Natural killer cell (primary cell): ENCODE measurements at regions of chr3 and their contacts with region 1.

Region 1: DNA sequence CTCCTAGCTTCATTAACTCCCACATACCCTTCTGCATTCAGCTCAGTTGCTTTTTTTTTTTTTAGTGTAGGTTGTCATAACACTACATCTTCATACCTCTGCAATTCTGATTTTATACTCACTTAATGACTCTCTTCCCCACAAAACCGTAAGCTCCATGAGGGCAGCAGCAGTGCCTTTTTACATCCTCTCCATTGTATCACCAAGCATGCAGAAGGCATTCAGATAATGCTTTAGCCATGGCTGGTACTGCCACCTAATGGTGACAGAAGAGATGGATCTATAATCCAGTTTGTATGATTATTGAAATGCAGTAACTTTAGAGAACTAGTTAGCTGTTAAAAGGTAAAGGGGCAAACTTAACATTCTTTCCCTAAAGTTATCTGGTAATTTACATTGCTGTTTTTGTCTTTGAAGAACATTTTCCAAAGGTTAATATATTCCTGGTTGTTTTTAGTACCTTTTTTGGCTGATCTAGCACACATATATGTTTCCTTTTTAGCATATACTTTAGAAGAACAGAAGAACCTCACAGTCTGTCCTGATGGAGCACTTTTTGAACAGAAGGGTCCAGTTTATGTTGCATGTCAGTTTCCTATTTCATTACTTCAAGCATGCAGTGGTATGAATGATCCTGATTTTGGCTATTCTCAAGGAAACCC is 36.8 kb downstream of the ATP1B3 start:
- DNase-seq: peak in 1 of 2 donors; percentile 79
- ATAC-seq: peak; percentile 82 to 96 (median 91)
- H3K4me3 ChIP-seq: no peak overlapping the region
- H3K4me3 Mint-ChIP-seq: no peak overlapping the region
- H3K27ac ChIP-seq: no peak overlapping the region
- H3K27ac Mint-ChIP-seq: peak overlapping the region in 1 of 2 donors; percentile 25
- H3K4me1 ChIP-seq: no peaks in the 10 kb centered on the region
- H3K4me1 Mint-ChIP-seq: peaks cover 6% of the 10 kb centered on the region in 2 donors
- H3K27me3 ChIP-seq: no peaks in the 10 kb centered on the region
- H3K27me3 Mint-ChIP-seq: no peaks in the 10 kb centered on the region
- CTCF ChIP-seq: peak; percentile 80

Region 2: DNA sequence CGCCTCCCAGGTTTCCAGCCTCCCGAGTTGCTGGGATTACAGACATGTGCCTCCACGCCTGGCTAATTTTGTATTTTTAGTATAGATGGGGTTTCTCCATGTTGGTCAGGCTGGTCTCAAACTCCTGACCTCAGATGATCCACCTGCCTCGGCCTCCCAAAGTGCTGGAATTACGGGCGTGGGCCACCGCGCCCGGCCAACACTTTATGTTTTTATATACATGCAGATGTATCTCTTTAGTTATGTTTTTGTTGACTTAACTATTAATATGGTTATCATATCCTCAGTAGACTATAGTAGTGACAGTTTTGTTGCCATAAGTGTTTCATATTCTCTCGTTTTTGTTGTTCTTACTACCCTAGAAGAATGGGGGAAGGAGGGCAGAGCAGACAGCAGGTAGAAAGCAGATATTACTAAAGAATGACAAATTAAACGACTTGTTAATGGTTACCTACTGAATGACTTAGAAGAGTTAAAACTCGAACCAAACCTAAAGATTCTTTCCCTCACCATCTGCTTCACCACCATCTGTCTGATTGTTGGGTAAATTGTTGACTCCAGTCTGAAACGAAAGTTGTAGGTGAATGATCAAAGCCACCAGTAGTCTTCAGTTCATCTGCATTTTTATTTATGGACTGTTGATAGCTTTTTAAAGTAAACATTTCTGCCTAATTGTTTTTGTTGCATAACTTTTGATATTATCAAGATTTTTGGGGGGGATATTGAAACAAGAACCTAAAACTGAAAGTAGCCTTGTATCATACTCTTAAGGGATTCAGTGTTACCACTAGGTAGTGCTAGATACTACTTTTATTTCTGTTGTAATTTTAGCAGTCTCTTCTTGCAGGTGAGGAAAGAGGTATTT is 337.2 kb before region 1 on chr3:
- intact Hi-C with region 1: loop called (anchors 5 kb)
- DNase-seq: peak in 1 of 2 donors; percentile 45
- ATAC-seq: peak; percentile 80 to 82 (median 81)
- H3K4me3 ChIP-seq: no peak overlapping the region
- H3K4me3 Mint-ChIP-seq: peak overlapping the region; percentile 43
- H3K27ac ChIP-seq: no peak overlapping the region
- H3K27ac Mint-ChIP-seq: peak overlapping the region; percentile 86 to 89
- H3K4me1 ChIP-seq: no peaks in the 10 kb centered on the region
- H3K4me1 Mint-ChIP-seq: peaks cover 6 to 7% of the 10 kb centered on the region in 2 donors
- H3K27me3 ChIP-seq: no peaks in the 10 kb centered on the region
- H3K27me3 Mint-ChIP-seq: no peaks in the 10 kb centered on the region
- CTCF ChIP-seq: peak; percentile 53

Region 3: DNA sequence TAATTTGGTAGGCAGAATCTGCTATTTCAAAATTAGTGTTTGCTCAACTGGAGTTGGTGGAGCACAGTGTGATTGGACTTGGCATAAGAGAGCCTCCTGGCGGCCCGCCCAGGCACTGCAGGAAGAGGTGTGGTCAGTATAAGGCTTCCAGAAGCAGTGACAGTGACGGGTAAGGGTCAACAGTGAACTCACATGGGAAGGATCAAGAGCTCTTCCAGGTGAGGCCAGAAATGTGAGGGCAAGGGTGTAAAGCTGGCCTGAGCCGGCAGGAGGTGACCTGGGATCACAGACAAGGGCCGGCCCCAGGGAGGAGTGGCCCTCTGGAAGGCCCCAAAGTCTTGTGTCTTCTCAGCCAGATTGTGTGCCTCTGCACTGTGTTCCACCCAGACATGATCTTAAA is 268.4 kb before region 1 on chr3:
- intact Hi-C with region 1: loop called (anchors 2 kb)
- DNase-seq: peak; percentile 69 to 72
- ATAC-seq: peak; percentile 88 to 98 (median 98)
- H3K4me3 ChIP-seq: no peak overlapping the region
- H3K4me3 Mint-ChIP-seq: no peak overlapping the region
- H3K27ac ChIP-seq: no peak overlapping the region
- H3K27ac Mint-ChIP-seq: no peak overlapping the region
- H3K4me1 ChIP-seq: no peaks in the 10 kb centered on the region
- H3K4me1 Mint-ChIP-seq: peaks cover 0 to 6% of the 10 kb centered on the region in 2 donors
- H3K27me3 ChIP-seq: no peaks in the 10 kb centered on the region
- H3K27me3 Mint-ChIP-seq: peaks cover 0 to 3% of the 10 kb centered on the region in 2 donors
- CTCF ChIP-seq: peak; percentile 86

Region 4: GRCh38 chr3:141875374-141875892 is 37.8 kb before region 1 on chr3:
- intact Hi-C with region 1: loop called (anchors 5 kb)
- DNase-seq: peak; percentile 74 to 91
- ATAC-seq: peak; percentile 63 to 81 (median 67)
- H3K4me3 ChIP-seq: peak overlapping the region; percentile 64
- H3K4me3 Mint-ChIP-seq: peak overlapping the region; percentile 96
- H3K27ac ChIP-seq: peak overlapping the region; percentile 94
- H3K27ac Mint-ChIP-seq: peak overlapping the region; percentile 81 to 95
- H3K4me1 ChIP-seq: peaks cover 6% of the 10 kb centered on the region
- H3K4me1 Mint-ChIP-seq: peaks cover 23 to 32% of the 10 kb centered on the region in 2 donors
- H3K27me3 ChIP-seq: no peaks in the 10 kb centered on the region
- H3K27me3 Mint-ChIP-seq: no peaks in the 10 kb centered on the region
- CTCF ChIP-seq: peak; percentile 85